ENCODE measurements at regions of chr14 and their contacts with region 1.

Region 1: GRCh38 chr14:22505697-22506377 is 83.2 kb downstream of the DAD1 start:
- DNase-seq: no peak
- ATAC-seq: peak; percentile 24
- H3K4me3 Mint-ChIP-seq: peak overlapping the region; percentile 91
- H3K27ac Mint-ChIP-seq: peak overlapping the region; percentile 96
- H3K4me1 Mint-ChIP-seq: peaks cover 44% of the 10 kb centered on the region
- H3K27me3 Mint-ChIP-seq: no peaks in the 10 kb centered on the region

Region 2: GRCh38 chr14:22491683-22492621 is 13.9 kb before region 1 on chr14:
- POLR2A ChIA-PET with region 1: interaction called, 24 read pairs
- DNase-seq: no peak
- ATAC-seq: peak; percentile 16
- H3K4me3 Mint-ChIP-seq: peak overlapping the region; percentile 90
- H3K27ac Mint-ChIP-seq: peak overlapping the region; percentile 89
- H3K4me1 Mint-ChIP-seq: peaks cover 3% of the 10 kb centered on the region
- H3K27me3 Mint-ChIP-seq: no peaks in the 10 kb centered on the region

Region 3: DNA sequence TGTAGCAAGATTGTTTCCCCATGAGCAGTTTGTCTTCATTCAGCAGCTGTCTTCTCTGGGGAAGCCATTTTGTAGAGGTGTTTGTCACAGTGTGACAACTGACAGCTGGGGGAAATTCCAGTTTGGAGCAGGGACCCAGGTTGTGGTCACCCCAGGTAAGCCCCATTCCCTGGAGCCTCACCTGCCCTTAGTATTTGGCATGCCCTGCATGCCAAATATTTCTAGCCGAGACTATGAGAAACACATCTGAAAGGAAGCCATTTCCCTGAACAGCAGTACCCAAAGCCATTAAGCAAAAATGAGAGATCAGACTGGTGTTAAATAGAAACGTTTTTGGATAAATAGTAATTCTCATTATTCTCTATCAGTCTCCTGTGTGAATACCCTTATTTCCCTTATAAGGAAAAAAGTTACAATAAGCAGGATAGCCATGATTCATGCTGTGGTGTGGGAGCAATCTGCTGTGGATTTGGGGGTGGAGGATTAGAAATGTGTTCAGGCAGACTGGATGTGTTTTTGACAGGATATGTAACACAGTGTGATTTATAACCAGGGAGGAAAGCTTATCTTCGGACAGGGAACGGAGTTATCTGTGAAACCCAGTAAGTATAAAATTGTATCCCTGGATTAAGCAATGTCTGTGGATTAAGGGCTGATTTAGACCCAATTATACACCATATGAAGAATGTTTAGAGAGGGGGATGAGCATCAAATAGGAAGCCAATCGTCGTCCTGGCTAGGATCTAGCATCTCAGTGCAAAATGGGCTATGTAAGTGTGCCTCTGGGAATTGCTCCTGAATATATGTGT is 14.2 kb after region 1 on chr14:
- POLR2A ChIA-PET with region 1: interaction called, 652 read pairs
- DNase-seq: no peak
- ATAC-seq: no peak
- H3K4me3 Mint-ChIP-seq: peak overlapping the region; percentile 99
- H3K27ac Mint-ChIP-seq: peak overlapping the region; percentile 98
- H3K4me1 Mint-ChIP-seq: peaks cover 74% of the 10 kb centered on the region
- H3K27me3 Mint-ChIP-seq: no peaks in the 10 kb centered on the region

Region 4: GRCh38 chr14:22542360-22542759 is 36.5 kb after region 1 on chr14:
- POLR2A ChIA-PET with region 1: interaction called, 646 read pairs
- DNase-seq: no peak
- ATAC-seq: no peak
- H3K4me3 Mint-ChIP-seq: peak overlapping the region; percentile 86
- H3K27ac Mint-ChIP-seq: peak overlapping the region; percentile 99
- H3K4me1 Mint-ChIP-seq: peaks cover 88% of the 10 kb centered on the region
- H3K27me3 Mint-ChIP-seq: no peaks in the 10 kb centered on the region

Region 5: DNA sequence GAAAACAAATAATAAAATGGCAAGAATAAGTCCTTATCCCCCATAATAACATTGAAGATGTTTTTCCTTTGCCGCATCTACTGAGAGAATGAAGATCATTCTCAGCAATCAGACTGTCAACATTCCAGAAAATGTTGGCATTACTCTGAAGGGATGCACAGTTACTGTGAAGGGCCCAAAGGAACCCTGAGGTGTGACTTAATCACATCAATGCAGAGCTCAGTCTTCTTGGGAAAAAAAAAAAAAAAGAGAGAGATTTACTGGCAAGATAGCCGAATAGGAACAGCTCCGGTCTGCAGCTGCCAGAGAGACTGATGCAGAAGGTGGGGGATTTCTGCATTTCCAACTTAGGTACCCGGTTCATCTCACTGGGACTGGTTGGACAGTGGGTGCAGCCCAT is 179.6 kb after region 1 on chr14:
- POLR2A ChIA-PET with region 1: no interaction called
- DNase-seq: no peak
- ATAC-seq: no peak
- H3K4me3 Mint-ChIP-seq: no peak overlapping the region
- H3K27ac Mint-ChIP-seq: no peak overlapping the region
- H3K4me1 Mint-ChIP-seq: no peaks in the 10 kb centered on the region
- H3K27me3 Mint-ChIP-seq: peaks cover 48% of the 10 kb centered on the region

Region 6: GRCh38 chr14:22737052-22737451 is 231.2 kb after region 1 on chr14:
- POLR2A ChIA-PET with region 1: no interaction called
- DNase-seq: no peak
- ATAC-seq: peak; percentile 88
- H3K4me3 Mint-ChIP-seq: peak overlapping the region; percentile 14
- H3K27ac Mint-ChIP-seq: peak overlapping the region; percentile 83
- H3K4me1 Mint-ChIP-seq: peaks cover 15% of the 10 kb centered on the region
- H3K27me3 Mint-ChIP-seq: peaks cover 9% of the 10 kb centered on the region